HEK293T (cell line): ENCODE measurements at regions of chr18 and their contacts with region 1.

Region 1: DNA sequence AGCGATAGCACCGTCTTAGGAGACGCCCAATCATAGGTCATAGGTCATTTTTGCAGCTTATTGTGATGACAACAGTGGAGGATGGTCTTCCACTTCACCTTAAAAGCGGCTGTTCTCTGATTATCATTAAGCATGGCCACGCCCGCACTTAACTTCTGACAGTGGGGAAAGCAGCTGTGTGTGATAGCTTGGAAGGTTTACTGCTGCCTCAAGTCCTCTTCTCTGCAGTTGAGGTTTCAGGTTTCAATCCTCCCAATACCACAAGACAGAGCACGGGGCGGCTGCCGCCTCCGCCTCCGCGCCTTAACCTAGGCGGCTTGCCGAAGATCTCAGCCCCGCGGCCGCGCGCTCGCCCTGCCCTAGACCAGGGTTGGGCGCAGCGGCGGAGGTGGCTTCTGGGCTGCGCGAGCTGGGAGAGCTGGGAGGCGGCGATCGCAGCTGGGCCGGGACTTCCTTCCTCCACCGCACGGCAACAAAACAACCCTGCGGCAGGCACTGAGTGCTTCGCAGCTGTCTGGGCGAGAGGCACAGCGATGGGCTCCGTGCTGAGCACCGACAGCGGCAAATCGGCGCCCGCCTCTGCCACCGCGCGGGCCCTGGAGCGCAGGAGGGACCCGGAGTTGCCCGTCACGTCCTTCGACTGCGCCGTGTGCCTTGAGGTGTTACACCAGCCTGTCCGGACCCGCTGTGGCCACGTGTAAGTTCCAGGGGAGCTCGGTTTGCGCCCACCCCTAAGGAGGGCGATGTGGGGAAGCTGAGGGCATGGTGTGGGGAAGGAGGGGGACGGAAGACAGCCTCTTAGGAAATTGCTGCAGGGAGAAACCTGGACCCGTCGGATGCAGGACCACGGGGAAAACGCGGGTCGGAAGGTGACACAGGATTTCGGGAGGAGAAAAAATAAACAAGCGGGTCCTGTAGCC is at the start of gene RNF125:
- DNase-seq: peak; percentile 96

Region 2: GRCh38 chr18:31061945-31062344 is 956.6 kb before region 1 on chr18:
- CTCF ChIA-PET with region 1: no interaction called
- POLR2A ChIA-PET with region 1: no interaction called
- DNase-seq: no peak

Region 3: DNA sequence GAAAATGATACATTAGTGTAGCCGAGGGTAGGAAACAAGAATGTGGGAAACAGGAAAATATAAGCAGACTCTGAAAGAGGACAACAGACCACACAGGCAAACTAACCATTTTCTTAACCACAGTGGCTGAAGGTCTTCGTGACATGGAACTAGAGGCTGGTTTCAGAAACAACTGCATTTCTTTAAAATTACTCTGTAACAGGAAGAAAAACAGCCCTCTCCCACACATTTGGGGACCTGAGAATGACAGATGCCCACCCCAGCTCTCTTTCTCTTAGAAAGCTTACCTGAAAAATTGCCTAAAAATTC is 244.2 kb before region 1 on chr18:
- CTCF ChIA-PET with region 1: no interaction called
- POLR2A ChIA-PET with region 1: no interaction called
- DNase-seq: no peak

Region 4: DNA sequence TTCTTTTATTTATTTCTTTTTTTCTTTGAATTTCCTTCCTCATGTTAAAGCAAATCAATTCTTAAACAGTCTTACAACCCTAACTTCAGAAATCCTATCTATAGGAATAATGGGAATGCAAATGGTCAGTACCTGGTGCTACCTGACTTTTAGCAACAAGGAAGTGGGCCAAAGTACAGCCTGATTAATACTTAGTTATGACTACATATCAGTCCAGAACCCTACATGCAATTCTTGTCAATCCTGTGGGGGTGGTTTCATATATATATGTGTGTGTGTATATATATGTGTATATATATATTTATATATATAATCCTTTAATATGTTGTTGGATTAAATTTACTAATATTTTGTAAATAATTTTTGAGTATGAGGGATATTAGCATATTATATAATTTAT is 60.9 kb before region 1 on chr18:
- CTCF ChIA-PET with region 1: no interaction called
- POLR2A ChIA-PET with region 1: no interaction called
- DNase-seq: no peak

Region 5: GRCh38 chr18:32049393-32050171 is 31.0 kb after region 1 on chr18:
- CTCF ChIA-PET with region 1: interaction called, 4 read pairs
- POLR2A ChIA-PET with region 1: interaction called, 16 read pairs
- DNase-seq: no peak

Region 6: DNA sequence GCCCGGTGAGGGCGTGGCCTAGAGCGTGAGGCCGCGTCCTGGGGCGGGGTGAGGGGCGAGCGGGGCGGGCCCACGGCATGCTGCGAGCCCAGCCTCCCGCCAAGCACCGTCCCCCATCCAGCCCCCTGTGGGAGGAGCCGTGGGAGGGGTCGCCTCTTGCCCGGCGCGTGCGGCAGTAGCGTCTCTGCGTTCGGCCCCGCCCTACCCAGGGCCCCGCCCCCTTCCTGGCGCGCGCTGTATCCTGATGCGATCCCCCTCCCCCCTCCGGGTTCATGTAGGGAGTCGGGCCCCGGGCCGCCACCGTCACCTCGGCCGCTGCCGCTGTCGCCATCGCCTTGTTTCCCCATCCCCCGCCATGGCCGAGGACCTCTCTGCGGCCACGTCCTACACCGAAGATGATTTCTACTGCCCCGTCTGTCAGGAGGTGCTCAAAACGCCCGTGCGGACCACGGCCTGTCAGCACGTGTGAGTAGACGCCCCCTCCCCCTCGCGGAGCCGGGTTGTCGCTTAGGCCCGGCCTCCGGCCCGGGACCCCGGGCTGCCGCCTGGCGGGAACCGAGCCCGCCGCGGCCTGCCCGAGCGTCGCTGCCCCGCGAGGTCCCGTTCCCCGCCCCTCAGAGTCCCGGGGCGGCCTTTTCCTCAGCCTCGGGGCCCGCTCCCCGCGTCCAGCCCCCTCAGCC is 74.0 kb after region 1 on chr18:
- CTCF ChIA-PET with region 1: interaction called, 3 read pairs
- POLR2A ChIA-PET with region 1: interaction called, 82 read pairs
- DNase-seq: peak; percentile 100

Region 7: GRCh38 chr18:32383050-32383819 is 364.6 kb after region 1 on chr18:
- CTCF ChIA-PET with region 1: no interaction called
- POLR2A ChIA-PET with region 1: no interaction called
- DNase-seq: no peak